ENCODE measurements at regions of chr11 and their contacts with region 1.

Region 1: DNA sequence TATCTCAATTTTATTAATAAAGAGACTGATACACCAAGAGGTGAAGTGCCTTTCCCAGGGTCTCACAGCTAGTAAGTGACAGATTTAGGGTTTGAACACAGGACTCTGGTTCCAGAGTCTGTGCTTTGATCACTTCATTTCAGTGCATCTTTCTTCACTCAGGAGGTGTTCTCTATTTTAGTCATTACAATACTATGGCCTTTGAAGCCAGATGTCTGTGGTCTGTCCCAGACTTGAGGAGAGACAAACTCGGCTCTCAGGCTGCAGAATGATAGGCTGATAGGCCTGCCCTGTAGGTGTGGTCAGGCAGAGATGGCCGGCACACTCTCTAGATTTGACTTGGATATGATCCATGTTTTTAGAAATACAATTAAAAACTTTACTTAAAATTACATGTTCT is 478.5 kb upstream of the CCDC90B start:
- DNase-seq: no peak

Region 2: GRCh38 chr11:83691451-83691950 is 73.1 kb before region 1 on chr11:
- intact Hi-C with region 1: no loop called
- DNase-seq: no peak

Region 3: DNA sequence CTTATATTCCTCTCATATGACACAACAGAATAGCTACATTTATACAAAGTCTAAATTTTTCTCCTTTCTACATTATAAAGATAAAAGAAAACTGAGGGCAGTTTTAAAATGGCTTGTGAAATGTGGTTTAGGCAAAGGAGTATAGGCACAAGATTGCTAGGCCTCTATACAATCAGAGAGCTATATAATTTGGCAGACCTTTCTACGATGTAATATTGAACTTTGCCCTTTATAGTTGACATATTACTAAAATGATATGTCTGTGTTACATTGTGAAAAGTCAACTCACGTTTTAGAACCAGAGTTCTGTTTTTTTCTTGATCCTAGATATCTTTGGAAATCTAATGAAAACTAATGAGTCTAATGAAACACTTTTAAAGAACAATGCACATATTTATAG is 1432.3 kb after region 1 on chr11:
- intact Hi-C with region 1: loop called in 1 of 2 experiments (anchors 5 kb)
- DNase-seq: no peak

Measured in posterior vena cava (tissue), 2 donors.